Mammary epithelial cell (primary cell): ENCODE measurements at regions of chr5 and their contacts with region 1.

Region 1: DNA sequence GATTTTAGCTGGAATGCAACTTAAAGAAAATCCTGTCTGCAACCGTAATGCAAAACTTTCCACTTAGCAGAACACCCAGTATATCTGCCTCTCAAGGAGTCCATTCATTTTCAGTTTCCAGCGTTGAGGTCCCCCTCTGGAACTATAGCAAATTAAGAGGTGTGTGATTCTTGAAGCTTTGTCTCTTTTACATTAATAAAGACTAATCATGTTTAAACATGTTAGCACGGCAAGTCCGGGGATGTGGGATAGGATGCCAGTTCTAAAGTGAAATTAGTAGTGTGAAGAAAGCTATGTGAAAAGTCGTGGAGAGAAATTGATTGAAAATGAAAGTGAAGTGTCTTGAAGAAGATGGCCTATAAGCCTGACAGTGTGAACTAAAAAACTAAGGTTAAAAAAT is 429.1 kb downstream of the NR2F1-AS1 start:
- DNase-seq: peak; percentile 29
- H3K4me3 ChIP-seq: peak overlapping the region; percentile 9 to 23 (median 22)
- H3K27ac ChIP-seq: peak overlapping the region; percentile 32
- H3K4me1 ChIP-seq: peaks cover 16% of the 10 kb centered on the region
- H3K27me3 ChIP-seq: no peaks in the 10 kb centered on the region
- CTCF ChIP-seq: no peak

Region 2: DNA sequence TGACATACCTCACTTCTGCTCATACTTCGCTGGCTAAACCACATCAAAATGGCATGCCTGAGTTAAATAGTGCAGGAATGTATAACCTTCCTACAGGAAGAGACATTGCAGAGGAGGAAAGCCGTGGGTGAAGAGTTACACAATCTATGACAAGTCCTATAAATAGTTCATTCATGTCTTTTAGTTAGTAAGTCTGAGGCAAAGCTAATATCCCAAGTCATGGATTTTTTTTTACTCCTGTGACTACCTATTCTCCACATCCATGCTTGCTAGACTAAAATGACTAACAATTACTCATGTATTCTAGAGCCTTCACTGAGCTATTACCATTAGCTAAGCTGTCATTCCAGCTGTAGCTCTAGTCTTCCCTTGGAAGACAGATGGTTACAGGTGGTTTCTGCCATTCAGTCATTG is 37.8 kb after region 1 on chr5:
- CTCF ChIA-PET with region 1: no interaction called
- dilution Hi-C with region 1: no loop called
- in situ Hi-C with region 1: no loop called
- intact Hi-C with region 1: loop called (anchors 1 kb)
- DNase-seq: peak; percentile 98
- H3K4me3 ChIP-seq: no peak overlapping the region
- H3K27ac ChIP-seq: peak overlapping the region; percentile 18
- H3K4me1 ChIP-seq: peaks cover 61% of the 10 kb centered on the region
- H3K27me3 ChIP-seq: no peaks in the 10 kb centered on the region
- CTCF ChIP-seq: no peak